ENCODE measurements at regions of chr2 and their contacts with region 1.

Region 1: GRCh38 chr2:101958061-101958460 is 33.7 kb upstream of the IL1R2 start:
- DNase-seq: peak; percentile 28
- ATAC-seq: no peak
- H3K4me3 ChIP-seq: no peak overlapping the region
- H3K27ac ChIP-seq: no peak overlapping the region
- H3K4me1 ChIP-seq: no peaks in the 10 kb centered on the region
- H3K27me3 ChIP-seq: no peaks in the 10 kb centered on the region
- CTCF ChIP-seq: no peak

Region 2: DNA sequence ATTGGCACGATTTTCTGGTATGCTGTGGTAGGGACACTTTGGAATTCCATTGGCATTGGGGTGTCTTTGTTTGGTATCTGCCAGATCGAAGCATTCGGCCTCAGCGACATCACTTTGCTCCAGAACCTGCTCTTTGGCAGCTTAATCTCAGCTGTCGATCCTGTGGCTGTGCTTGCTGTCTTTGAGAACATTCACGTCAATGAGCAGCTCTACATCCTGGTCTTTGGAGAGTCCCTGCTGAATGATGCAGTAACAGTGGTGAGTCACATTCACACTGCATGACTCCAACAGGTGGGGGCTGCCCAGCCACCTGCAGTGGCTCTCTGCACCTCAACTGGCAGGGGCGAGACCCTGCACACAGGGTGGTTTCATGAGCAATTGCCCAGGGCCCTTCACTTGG is 699.7 kb after region 1 on chr2:
- CTCF ChIA-PET with region 1: no interaction called
- POLR2A ChIA-PET with region 1: interaction called, 15 read pairs
- intact Hi-C with region 1: no loop called
- DNase-seq: peak; percentile 65
- ATAC-seq: no peak
- H3K4me3 ChIP-seq: no peak overlapping the region
- H3K27ac ChIP-seq: peak overlapping the region; percentile 49
- H3K4me1 ChIP-seq: peaks cover 38% of the 10 kb centered on the region
- H3K27me3 ChIP-seq: no peaks in the 10 kb centered on the region
- CTCF ChIP-seq: no peak

Measured in PC-3 (cell line).